ENCODE measurements at regions of chr11 and their contacts with region 1.

Region 1: DNA sequence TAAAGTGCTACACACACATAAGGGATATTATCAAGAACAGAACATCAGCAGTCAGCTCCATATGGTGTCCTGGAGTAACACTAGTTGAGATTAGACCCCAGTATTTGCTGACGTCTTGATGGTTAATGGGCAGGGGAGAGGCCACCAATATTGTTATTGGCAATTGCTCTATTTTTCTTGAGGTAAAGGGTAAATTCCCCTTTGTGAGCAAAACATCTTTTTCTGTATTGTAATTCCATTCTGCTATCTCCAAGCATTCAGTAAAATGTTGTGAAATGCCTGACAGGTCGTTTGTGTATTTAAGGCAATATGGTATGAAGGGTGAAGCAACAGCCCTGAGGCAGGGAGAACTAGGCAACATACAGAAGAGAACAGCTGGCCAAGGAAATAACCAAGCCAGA is 21.9 kb downstream of the PC start:
- DNase-seq: no peak
- ATAC-seq: no peak
- H3K4me3 ChIP-seq: no peak overlapping the region
- H3K4me3 Mint-ChIP-seq: no peak overlapping the region
- H3K27ac ChIP-seq: no peak overlapping the region
- H3K27ac Mint-ChIP-seq: no peak overlapping the region
- H3K4me1 ChIP-seq: no peaks in the 10 kb centered on the region
- H3K4me1 Mint-ChIP-seq: peaks cover 0 to 6% (median 0%) of the 10 kb centered on the region in 7 donors
- H3K27me3 ChIP-seq: no peaks in the 10 kb centered on the region
- H3K27me3 Mint-ChIP-seq: peaks cover 0 to 8% (median 2%) of the 10 kb centered on the region in 5 donors

Region 2: GRCh38 chr11:66251809-66252208 is 684.5 kb before region 1 on chr11:
- CTCF ChIA-PET with region 1: no interaction called
- POLR2A ChIA-PET with region 1: no interaction called
- intact Hi-C with region 1: no loop called
- DNase-seq: no peak
- ATAC-seq: no peak
- H3K4me3 ChIP-seq: no peak overlapping the region
- H3K4me3 Mint-ChIP-seq: peak overlapping the region in 1 of 10 donors; percentile 36
- H3K27ac ChIP-seq: no peak overlapping the region
- H3K27ac Mint-ChIP-seq: peak overlapping the region in 6 of 9 donors; percentile 5 to 84 (median 77)
- H3K4me1 ChIP-seq: peaks cover 8 to 10% of the 10 kb centered on the region in 2 donors
- H3K4me1 Mint-ChIP-seq: peaks cover 6 to 30% (median 21%) of the 10 kb centered on the region in 7 donors
- H3K27me3 ChIP-seq: no peaks in the 10 kb centered on the region
- H3K27me3 Mint-ChIP-seq: no peaks in the 10 kb centered on the region

Region 3: DNA sequence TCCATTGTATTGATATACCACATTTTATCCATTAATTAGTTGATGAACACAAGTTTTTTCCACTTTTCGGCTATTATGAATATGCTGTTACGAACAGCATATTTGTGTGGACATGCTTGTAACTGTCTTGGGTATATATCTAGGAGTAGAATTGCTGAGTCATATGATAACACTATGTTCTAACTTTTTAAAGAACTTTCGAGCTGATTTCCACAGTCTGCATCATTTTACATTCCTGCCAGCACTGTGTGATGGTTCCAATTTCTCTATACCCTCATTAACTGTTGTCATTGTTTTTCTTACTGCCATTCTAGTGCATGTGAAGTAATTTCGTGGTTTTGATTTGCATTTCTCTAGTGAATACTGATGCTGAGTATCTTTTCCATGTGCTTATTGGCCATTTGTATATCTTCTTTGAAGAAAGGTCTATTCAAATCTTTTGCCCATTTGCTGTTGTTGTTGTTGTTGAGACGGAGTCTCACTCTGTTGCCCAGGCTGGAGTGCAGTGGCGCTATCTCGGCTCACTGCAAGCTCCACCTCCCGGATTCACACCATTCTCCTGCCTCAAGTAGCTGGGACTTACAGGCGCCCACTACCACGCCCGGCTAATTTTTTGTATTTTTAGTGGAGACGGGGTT is 100.4 kb before region 1 on chr11:
- CTCF ChIA-PET with region 1: no interaction called
- POLR2A ChIA-PET with region 1: no interaction called
- intact Hi-C with region 1: no loop called
- DNase-seq: no peak
- ATAC-seq: no peak
- H3K4me3 ChIP-seq: no peak overlapping the region
- H3K4me3 Mint-ChIP-seq: no peak overlapping the region
- H3K27ac ChIP-seq: no peak overlapping the region
- H3K27ac Mint-ChIP-seq: peak overlapping the region in 1 of 9 donors; percentile 53
- H3K4me1 ChIP-seq: peaks cover 8 to 17% of the 10 kb centered on the region in 2 donors
- H3K4me1 Mint-ChIP-seq: peaks cover 9 to 37% (median 32%) of the 10 kb centered on the region in 7 donors
- H3K27me3 ChIP-seq: no peaks in the 10 kb centered on the region
- H3K27me3 Mint-ChIP-seq: no peaks in the 10 kb centered on the region

Region 4: GRCh38 chr11:66996609-66997405 is 60.5 kb after region 1 on chr11:
- CTCF ChIA-PET with region 1: no interaction called
- POLR2A ChIA-PET with region 1: no interaction called
- intact Hi-C with region 1: loop called in 1 of 2 experiments (anchors 10 kb)
- DNase-seq: no peak
- ATAC-seq: no peak
- H3K4me3 ChIP-seq: no peak overlapping the region
- H3K4me3 Mint-ChIP-seq: no peak overlapping the region
- H3K27ac ChIP-seq: no peak overlapping the region
- H3K27ac Mint-ChIP-seq: no peak overlapping the region
- H3K4me1 ChIP-seq: no peaks in the 10 kb centered on the region
- H3K4me1 Mint-ChIP-seq: no peaks in the 10 kb centered on the region
- H3K27me3 ChIP-seq: no peaks in the 10 kb centered on the region
- H3K27me3 Mint-ChIP-seq: peaks cover 0 to 20% (median 13%) of the 10 kb centered on the region in 5 donors

Measured in naive thymus-derived CD4-positive, alpha-beta T cell (primary cell).